Right cardiac atrium (tissue), 5 donors: ENCODE measurements at regions of chr2 and their contacts with region 1.

Region 1: GRCh38 chr2:112692496-112692911 is 28.3 kb upstream of the NT5DC4 start:
- DNase-seq: peak in 1 of 3 donors; percentile 39
- ATAC-seq: peak; percentile 65 to 70
- H3K4me3 ChIP-seq: no peak overlapping the region
- H3K27ac ChIP-seq: no peak overlapping the region
- H3K4me1 ChIP-seq: no peaks in the 10 kb centered on the region
- H3K27me3 ChIP-seq: no peaks in the 10 kb centered on the region

Region 2: GRCh38 chr2:112626604-112627059 is 65.9 kb before region 1 on chr2:
- intact Hi-C with region 1: loop called in 2 of 4 experiments (anchors 10 kb)
- DNase-seq: peak; percentile 64 to 88 (median 79)
- ATAC-seq: peak; percentile 69 to 77
- H3K4me3 ChIP-seq: no peak overlapping the region
- H3K27ac ChIP-seq: peak overlapping the region; percentile 97
- H3K4me1 ChIP-seq: peaks cover 9% of the 10 kb centered on the region
- H3K27me3 ChIP-seq: no peaks in the 10 kb centered on the region